H1 (cell line): ENCODE measurements at regions of chr13 and their contacts with region 1.

Region 1: GRCh38 chr13:25827831-25828465 is 223.9 kb downstream of the SHISA2 start:
- DNase-seq: no peak
- H3K4me3 ChIP-seq: no peak overlapping the region
- H3K27ac ChIP-seq: no peak overlapping the region
- H3K4me1 ChIP-seq: no peaks in the 10 kb centered on the region
- H3K27me3 ChIP-seq: no peaks in the 10 kb centered on the region
- CTCF ChIP-seq: no peak
- EP300 ChIP-seq: no peak
- POLR2A ChIP-seq: no peak
- RAD21 ChIP-seq: no peak

Region 2: GRCh38 chr13:25574437-25575411 is 253.2 kb before region 1 on chr13:
- CTCF ChIA-PET with region 1: interaction called, 11 read pairs
- POLR2A ChIA-PET with region 1: no interaction called
- DNase-seq: peak; percentile 80 to 89
- H3K4me3 ChIP-seq: no peak overlapping the region
- H3K27ac ChIP-seq: no peak overlapping the region
- H3K4me1 ChIP-seq: no peaks in the 10 kb centered on the region; a peak in 1 of 7 replicates
- H3K27me3 ChIP-seq: no peaks in the 10 kb centered on the region
- CTCF ChIP-seq: peak; percentile 52 to 96 (median 92)
- EP300 ChIP-seq: no peak
- POLR2A ChIP-seq: no peak
- RAD21 ChIP-seq: peak; percentile 99 to 100

Region 3: DNA sequence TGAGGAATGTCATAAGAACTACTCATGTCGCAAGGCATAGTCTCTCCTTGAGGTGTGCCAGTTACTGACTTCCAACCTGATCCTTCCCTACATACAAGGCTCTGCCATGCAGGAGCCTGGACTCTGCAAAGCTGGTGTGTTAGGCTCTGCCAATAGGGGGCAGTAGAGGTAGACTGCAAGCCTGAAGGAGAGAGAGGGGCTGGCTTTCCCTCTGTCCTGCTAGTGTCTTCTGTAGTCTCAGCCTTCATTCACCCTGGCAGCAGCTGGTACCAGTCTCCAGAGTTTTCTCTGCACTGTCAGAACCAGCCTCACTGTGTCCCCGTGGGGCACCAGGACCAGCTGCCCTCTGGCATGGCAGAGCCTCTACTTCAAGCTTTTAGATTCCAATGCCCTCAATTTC is 209.4 kb after region 1 on chr13:
- CTCF ChIA-PET with region 1: interaction called, 12 read pairs
- POLR2A ChIA-PET with region 1: no interaction called
- DNase-seq: peak; percentile 69 to 90
- H3K4me3 ChIP-seq: no peak overlapping the region
- H3K27ac ChIP-seq: no peak overlapping the region
- H3K4me1 ChIP-seq: peaks cover 0 to 6% (median 2%) of the 10 kb centered on the region in 4 experiments; a peak in 1 of 7 replicates
- H3K27me3 ChIP-seq: no peaks in the 10 kb centered on the region; a peak in 1 of 7 replicates
- CTCF ChIP-seq: peak; percentile 87 to 99 (median 90)
- EP300 ChIP-seq: no peak
- POLR2A ChIP-seq: no peak
- RAD21 ChIP-seq: peak; percentile 66 to 87

Region 4: GRCh38 chr13:26062844-26063444 is 235.0 kb after region 1 on chr13:
- CTCF ChIA-PET with region 1: interaction called, 76 read pairs
- POLR2A ChIA-PET with region 1: no interaction called
- DNase-seq: no peak
- H3K4me3 ChIP-seq: no peak overlapping the region
- H3K27ac ChIP-seq: no peak overlapping the region
- H3K4me1 ChIP-seq: no peaks in the 10 kb centered on the region
- H3K27me3 ChIP-seq: no peaks in the 10 kb centered on the region; a peak in 1 of 7 replicates
- CTCF ChIP-seq: peak in 2 of 3 experiments; percentile 66 to 73; a peak in 2 of 4 replicates
- EP300 ChIP-seq: no peak
- POLR2A ChIP-seq: no peak
- RAD21 ChIP-seq: peak; percentile 90

Region 5: DNA sequence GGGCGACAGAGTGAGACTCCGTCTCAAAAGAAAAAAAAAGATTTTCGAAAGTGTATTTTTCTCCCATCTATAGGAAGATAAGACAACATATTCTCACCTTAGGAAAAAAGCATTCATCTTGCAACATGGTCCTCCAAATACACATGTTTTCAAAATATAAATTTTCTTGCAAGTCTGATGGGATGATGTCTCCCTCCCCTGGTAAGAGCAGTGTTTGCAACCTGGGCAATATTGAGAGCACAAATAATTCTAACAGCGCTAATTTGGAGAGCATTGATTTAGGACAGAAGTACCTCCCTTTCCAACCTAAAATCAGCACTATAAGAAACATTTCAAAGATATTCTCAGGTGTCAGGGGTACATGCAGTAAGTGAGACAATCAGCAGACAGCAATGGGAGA is 284.9 kb after region 1 on chr13:
- CTCF ChIA-PET with region 1: interaction called, 10 read pairs
- POLR2A ChIA-PET with region 1: no interaction called
- DNase-seq: no peak
- H3K4me3 ChIP-seq: no peak overlapping the region
- H3K27ac ChIP-seq: no peak overlapping the region
- H3K4me1 ChIP-seq: no peaks in the 10 kb centered on the region
- H3K27me3 ChIP-seq: no peaks in the 10 kb centered on the region
- CTCF ChIP-seq: peak in 2 of 3 experiments; percentile 44 to 69; a peak in 2 of 4 replicates
- EP300 ChIP-seq: no peak
- POLR2A ChIP-seq: no peak
- RAD21 ChIP-seq: peak; percentile 80 to 81